ENCODE measurements at regions of chr15 and their contacts with region 1.

Region 1: DNA sequence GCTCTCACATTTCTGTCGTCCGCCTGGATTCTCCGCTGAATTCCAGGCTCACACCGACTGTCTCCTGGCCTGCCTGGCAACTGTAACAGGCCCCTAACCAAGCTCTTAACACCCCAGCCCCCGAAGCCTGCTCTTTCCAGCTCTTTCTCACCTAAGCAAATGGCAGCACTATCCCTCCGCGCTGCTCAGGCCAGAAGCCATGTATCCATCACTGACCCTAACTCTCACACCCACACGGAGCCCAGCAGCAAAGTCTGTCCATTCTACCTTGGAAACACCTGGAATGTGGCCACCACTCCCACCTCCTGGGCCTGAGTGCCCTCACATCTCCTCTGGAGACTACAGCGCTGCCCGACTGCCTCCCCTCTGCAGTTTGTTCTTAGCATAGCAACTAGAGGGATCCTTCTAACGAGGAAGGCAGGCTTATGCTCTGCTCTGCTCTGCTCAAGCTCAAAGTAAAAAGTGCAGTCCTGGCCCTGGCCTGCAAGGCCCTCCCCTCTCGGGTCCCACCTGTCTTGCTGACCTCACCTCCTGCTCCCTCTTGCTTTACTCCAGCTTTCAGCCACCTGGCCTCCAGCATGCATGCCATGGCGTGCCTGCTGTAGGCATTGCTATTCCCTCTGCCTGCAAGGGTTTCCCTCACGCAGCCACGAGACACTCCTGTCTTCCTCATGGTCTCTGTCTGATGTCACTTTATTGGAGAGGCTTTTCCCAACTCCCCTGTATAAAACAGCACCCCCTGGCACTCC is 27.2 kb downstream of the FEM1B start:
- DNase-seq: no peak
- H3K4me3 Mint-ChIP-seq: no peak overlapping the region
- H3K27ac Mint-ChIP-seq: peak overlapping the region; percentile 45
- H3K4me1 Mint-ChIP-seq: peaks cover 20% of the 10 kb centered on the region
- H3K27me3 Mint-ChIP-seq: peaks cover 6% of the 10 kb centered on the region

Region 2: DNA sequence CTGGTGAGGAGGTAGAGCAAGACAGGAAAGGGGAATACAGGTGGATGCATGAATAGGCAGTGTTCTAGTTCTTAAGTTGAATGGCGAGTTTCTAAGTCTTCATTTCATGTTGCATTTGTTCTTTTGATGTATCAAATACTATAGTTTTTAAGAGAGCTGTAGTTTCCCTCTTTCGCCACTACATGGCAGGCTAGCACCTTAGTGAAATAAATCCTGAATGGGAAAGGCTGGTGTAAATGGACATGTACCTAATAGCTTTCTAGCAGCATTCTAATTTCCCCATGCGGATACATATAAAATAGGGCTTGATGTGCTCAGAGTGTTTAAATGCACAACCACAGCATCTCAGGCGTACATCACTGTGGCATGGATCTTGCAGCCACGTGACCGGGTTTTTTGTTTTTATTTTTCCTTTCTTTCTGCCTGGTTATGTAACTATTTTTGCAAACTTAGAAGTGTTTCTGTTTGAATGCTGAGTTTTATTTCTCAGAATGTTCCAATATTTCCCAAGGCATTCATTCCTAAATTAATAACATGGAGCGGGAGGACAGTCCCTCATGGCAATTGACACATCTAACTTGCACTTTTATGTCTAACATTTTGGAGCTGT is 51.7 kb before region 1 on chr15:
- intact Hi-C with region 1: loop called (anchors 1 kb)
- DNase-seq: peak; percentile 84
- H3K4me3 Mint-ChIP-seq: no peak overlapping the region
- H3K27ac Mint-ChIP-seq: no peak overlapping the region
- H3K4me1 Mint-ChIP-seq: peaks cover 8% of the 10 kb centered on the region
- H3K27me3 Mint-ChIP-seq: peaks cover 31% of the 10 kb centered on the region

Region 3: GRCh38 chr15:68383161-68384074 is 78.7 kb after region 1 on chr15:
- intact Hi-C with region 1: loop called (anchors 1 kb)
- DNase-seq: peak; percentile 88
- H3K4me3 Mint-ChIP-seq: no peak overlapping the region
- H3K27ac Mint-ChIP-seq: no peak overlapping the region
- H3K4me1 Mint-ChIP-seq: peaks cover 25% of the 10 kb centered on the region
- H3K27me3 Mint-ChIP-seq: peaks cover 3% of the 10 kb centered on the region

Region 4: GRCh38 chr15:68418611-68419161 is 113.9 kb after region 1 on chr15:
- intact Hi-C with region 1: no loop called
- DNase-seq: no peak
- H3K4me3 Mint-ChIP-seq: no peak overlapping the region
- H3K27ac Mint-ChIP-seq: no peak overlapping the region
- H3K4me1 Mint-ChIP-seq: no peaks in the 10 kb centered on the region
- H3K27me3 Mint-ChIP-seq: no peaks in the 10 kb centered on the region

Region 5: DNA sequence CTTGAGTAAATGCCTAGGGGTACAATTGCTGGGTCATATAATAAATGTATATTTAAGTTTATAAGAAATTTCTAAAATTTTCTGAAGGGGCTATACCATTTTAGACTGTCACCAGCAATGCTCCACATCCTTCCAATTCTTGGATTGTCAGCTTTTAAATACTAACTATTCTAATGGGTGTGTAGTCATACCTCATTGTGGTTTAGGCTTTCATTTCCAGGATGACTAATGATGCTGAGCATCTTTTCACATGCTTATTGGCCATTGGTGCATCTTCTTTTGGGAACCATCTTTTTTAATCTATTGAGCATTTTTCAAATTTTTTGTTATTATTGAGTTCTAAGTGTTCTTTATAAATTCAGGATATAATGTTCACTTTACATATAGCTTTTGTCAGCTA is 221.5 kb after region 1 on chr15:
- intact Hi-C with region 1: loop called (anchors 5 kb)
- DNase-seq: no peak
- H3K4me3 Mint-ChIP-seq: no peak overlapping the region
- H3K27ac Mint-ChIP-seq: no peak overlapping the region
- H3K4me1 Mint-ChIP-seq: peaks cover 25% of the 10 kb centered on the region
- H3K27me3 Mint-ChIP-seq: peaks cover 27% of the 10 kb centered on the region

Region 6: DNA sequence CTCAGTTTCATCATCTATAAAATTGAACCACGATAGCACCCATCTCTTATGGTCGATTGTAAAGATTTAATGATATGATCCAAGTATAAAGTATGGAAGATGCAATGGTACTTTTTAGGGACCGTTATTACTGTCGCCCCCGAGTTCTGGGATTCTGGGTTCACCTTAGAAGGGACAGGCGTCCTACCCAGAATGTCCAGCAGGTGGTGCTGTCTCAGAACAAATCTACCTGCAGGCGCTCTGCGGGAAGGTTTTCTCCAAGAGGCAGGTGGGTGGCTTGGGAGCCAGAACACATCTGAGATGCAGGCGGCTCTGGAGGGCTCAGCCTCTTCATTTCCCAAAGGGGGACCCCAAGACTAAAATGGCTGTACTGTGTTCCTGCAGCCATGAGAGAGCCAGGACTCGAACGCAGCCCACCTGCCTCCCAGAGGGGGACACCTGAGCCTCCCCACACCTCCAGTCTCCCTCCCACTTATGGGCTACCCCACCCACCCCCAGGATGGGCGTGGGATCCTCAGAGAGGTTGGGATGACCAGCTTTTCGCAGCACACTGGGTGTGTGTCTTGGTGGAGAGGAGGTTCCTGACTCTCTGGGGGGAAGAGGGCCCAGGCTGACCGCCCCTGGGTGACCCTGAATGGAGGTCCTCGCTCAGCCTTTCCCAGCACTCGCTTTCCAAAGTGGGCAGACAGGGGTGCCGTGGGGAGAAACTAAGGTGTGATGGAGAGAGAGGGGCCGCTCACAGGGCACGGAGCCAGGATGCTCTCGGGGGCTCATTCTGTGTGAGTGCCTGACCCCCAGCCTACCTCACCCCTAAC is 245.9 kb after region 1 on chr15:
- intact Hi-C with region 1: loop called (anchors 5 kb)
- DNase-seq: peak; percentile 92
- H3K4me3 Mint-ChIP-seq: no peak overlapping the region
- H3K27ac Mint-ChIP-seq: no peak overlapping the region
- H3K4me1 Mint-ChIP-seq: no peaks in the 10 kb centered on the region
- H3K27me3 Mint-ChIP-seq: peaks cover 39% of the 10 kb centered on the region

Region 7: DNA sequence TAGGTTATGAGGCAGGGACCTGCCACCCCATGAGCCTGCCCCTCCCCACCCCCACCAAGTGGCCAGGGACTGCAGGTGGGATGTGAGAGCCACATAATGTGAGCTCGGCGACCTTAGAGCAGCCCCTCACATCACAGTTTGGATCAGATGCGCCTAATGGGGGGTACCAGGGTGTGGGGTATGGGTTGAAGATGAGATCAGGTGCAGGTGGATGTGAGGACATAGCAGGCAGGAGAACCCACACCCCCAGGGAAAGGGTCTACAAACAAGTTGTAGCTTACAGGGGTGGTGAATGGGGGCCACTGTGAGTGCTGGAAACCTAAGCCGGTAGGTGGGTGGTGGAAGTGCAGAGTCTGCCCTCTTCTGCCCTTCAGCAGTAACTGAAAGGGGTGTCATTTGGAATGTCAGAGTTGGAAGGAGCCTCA is 368.0 kb after region 1 on chr15:
- intact Hi-C with region 1: loop called (anchors 10 kb)
- DNase-seq: no peak
- H3K4me3 Mint-ChIP-seq: no peak overlapping the region
- H3K27ac Mint-ChIP-seq: no peak overlapping the region
- H3K4me1 Mint-ChIP-seq: peaks cover 3% of the 10 kb centered on the region
- H3K27me3 Mint-ChIP-seq: peaks cover 23% of the 10 kb centered on the region

Measured in activated CD4-positive, alpha-beta T cell treated with anti-CD3 and anti-CD28 coated beads, Interleukin-2, amount 10 ng/mL, durations not matched to agents 24 days and 14 days (primary cell).